Activated T-helper 1 cell treated with anti-CD3 and anti-CD28 coated beads, Interleukin-12 subunit alpha, Interleukin-12 subunit beta, Interleukin-2, Interleukin-4 antibody, amounts not matched to agents 30 ng/mL and 10 ng/mL and 1 ng/mL, durations not matched to agents 14 hours and 24 hours and 36 hours (primary cell): ENCODE measurements at regions of chr2 and their contacts with region 1.

Region 1: DNA sequence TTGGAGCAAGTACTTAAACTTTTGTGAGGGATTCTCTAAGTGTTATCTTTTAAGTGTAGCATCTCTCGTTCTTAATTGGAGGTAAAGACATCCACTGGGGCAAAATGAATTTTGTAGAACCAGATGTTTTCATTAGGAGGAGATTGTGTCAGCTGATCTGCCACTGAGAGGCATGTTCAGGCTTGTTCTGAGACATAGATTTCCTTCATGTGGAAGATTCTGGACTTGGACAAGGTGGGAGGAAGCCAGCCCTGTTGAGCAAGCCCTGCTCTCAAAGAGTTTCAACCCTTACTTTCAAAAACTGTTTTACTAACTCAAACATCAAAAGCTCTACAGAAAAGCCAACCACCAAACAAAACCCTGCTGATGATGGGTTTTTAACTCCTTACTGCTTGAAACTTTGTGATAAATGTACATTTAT is 6.5 kb downstream of the MAP4K4 start:
- DNase-seq: no peak
- H3K4me3 Mint-ChIP-seq: peak overlapping the region; percentile 78
- H3K27ac Mint-ChIP-seq: peak overlapping the region; percentile 82
- H3K4me1 Mint-ChIP-seq: peaks cover 64% of the 10 kb centered on the region
- H3K27me3 Mint-ChIP-seq: no peaks in the 10 kb centered on the region

Region 2: GRCh38 chr2:101569886-101570520 is 134.1 kb before region 1 on chr2:
- intact Hi-C with region 1: loop called (anchors 5 kb)
- DNase-seq: no peak
- H3K4me3 Mint-ChIP-seq: no peak overlapping the region
- H3K27ac Mint-ChIP-seq: peak overlapping the region; percentile 91
- H3K4me1 Mint-ChIP-seq: peaks cover 47% of the 10 kb centered on the region
- H3K27me3 Mint-ChIP-seq: peaks cover 8% of the 10 kb centered on the region

Region 3: GRCh38 chr2:101751875-101752619 is 48.0 kb after region 1 on chr2:
- intact Hi-C with region 1: loop called (anchors 2 kb)
- DNase-seq: no peak
- H3K4me3 Mint-ChIP-seq: no peak overlapping the region
- H3K27ac Mint-ChIP-seq: no peak overlapping the region
- H3K4me1 Mint-ChIP-seq: peaks cover 61% of the 10 kb centered on the region
- H3K27me3 Mint-ChIP-seq: no peaks in the 10 kb centered on the region

Region 4: GRCh38 chr2:102527086-102527485 is 823.0 kb after region 1 on chr2:
- intact Hi-C with region 1: no loop called
- DNase-seq: no peak
- H3K4me3 Mint-ChIP-seq: no peak overlapping the region
- H3K27ac Mint-ChIP-seq: no peak overlapping the region
- H3K4me1 Mint-ChIP-seq: no peaks in the 10 kb centered on the region
- H3K27me3 Mint-ChIP-seq: peaks cover 3% of the 10 kb centered on the region